Activated naive CD4-positive, alpha-beta T cell treated with anti-CD3 and anti-CD28 coated beads for 36 hours (primary cell): ENCODE measurements at regions of chr17 and their contacts with region 1.

Region 1: DNA sequence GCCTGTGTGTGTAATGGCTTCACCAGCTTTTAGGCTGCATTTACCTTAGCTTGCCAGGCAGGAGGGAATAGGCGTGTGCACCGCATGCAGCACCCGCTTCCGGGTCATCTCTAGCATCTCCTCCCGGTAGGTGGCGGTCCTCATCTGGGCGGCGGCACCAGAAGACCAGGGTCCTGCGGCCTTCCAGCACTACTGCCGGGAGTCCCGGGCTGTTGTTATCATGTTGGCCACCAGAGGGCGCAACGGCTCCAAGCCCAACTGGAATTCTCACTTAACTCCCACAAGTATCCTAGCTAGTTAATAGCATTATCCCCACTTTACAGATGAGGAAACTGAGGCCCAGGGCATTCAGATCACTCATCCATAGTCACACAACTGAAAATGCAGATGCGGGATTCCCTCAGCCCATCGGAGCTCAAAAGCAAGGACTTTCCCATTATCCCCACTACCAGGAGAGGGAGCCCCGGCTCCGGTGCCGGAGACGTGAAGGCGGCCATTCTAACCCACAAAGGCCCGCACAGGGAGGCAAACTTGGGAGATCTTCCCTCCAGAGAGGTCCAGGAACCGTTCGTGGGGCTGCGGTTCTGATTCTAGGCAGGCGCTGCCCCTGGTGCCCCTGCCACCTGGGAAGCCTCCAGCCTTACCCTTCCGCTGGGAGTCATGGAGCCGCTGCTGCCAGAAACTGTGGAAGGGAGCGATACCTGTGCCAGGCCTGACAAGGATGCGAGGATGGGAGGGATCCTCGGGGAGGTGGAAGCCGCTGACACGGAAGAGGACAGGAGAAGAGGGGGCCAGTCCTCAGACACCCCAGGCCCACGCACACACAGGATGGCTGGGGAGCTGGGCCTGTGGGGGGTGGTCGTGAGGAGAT is 23.9 kb downstream of the LGALS9 start:
- DNase-seq: peak; percentile 82
- H3K4me3 Mint-ChIP-seq: no peak overlapping the region
- H3K27ac Mint-ChIP-seq: no peak overlapping the region
- H3K4me1 Mint-ChIP-seq: peaks cover 6% of the 10 kb centered on the region
- H3K27me3 Mint-ChIP-seq: no peaks in the 10 kb centered on the region

Region 2: DNA sequence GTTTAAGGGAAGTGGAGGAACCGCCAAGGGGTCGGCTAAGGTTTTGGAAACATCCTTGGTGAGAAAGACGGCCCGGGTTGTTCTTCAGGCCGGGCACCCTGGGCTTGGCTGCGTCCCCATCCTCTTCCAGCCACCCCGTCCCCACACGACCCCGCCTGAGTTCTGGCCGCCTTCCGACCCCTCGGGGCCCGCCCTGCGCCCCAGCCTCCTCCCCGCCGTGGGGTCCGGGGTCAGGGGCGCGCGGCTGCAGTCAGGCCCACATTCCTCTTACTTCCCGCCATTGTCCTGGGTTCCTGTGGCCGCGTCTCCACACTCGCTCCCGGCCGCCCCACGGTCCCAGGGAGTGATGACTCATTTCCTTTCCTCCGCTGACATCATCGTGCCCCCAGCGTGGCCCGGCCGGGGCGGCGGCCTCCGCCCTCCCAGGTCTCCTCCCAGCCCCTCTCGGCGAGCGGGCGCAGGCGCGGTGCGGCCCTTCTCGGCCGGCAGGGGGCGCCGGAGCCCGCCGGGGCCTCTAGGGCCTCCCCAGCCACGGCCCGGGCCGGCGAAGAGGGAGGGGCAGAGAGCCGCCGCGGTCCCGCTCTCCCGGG is 301.3 kb before region 1 on chr17:
- CTCF ChIA-PET with region 1: interaction called, 10 read pairs
- intact Hi-C with region 1: loop called (anchors 1 kb)
- DNase-seq: peak; percentile 86
- H3K4me3 Mint-ChIP-seq: peak overlapping the region; percentile 89
- H3K27ac Mint-ChIP-seq: peak overlapping the region; percentile 93
- H3K4me1 Mint-ChIP-seq: peaks cover 23% of the 10 kb centered on the region
- H3K27me3 Mint-ChIP-seq: no peaks in the 10 kb centered on the region

Region 3: DNA sequence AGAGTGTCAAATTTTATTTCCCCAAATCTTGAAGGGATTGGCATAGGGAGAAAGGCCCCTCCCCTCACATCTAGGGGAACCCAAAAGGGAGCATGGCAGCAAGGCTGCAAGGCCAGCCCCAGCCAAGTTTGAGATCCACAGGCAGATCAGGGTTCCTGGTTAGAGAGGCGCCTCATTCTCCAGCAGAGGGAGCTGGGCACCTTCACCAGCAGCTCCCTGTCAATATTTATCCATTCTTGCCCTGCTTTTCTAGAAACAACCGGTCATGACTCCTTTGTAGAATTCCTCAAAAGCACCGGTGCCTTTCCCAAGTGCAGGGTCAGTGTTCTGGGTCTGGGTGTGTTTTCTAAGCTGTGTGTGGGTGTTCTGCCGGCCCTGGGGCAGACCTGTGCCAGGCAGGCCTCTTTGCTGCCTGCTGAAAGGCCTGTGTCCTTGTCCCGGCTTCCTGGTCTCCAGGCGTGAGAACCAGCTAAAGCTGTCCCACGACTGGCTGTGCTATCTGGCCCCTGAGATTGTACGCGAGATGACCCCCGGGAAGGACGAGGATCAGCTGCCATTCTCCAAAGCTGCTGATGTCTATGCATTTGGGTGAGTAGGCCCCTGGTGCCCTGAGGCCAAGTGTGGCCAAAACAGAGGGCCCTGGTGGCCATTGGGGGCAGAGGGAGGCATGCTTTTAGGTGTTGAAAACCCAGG is 45.1 kb before region 1 on chr17:
- CTCF ChIA-PET with region 1: interaction called, 124 read pairs
- intact Hi-C with region 1: no loop called
- DNase-seq: peak; percentile 41
- H3K4me3 Mint-ChIP-seq: no peak overlapping the region
- H3K27ac Mint-ChIP-seq: no peak overlapping the region
- H3K4me1 Mint-ChIP-seq: peaks cover 24% of the 10 kb centered on the region
- H3K27me3 Mint-ChIP-seq: no peaks in the 10 kb centered on the region

Region 4: DNA sequence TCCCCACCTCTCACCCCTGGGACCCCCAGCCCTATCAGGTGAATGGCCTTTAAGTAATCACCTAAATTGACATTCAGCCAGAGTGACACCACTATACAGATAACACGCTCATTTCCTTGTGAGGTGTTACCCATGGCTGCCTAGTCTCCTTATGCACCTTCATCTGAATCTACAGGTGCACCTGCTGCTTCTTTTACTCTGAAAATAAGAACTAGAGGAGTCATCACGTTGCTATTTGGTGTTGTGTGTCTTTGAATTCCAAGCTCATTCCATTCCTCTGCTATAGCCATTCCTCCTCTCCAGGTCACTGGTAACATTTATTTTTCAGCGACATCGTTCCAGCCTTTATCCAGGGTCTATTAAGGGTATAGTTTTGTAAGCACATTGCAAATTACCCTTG is 14.1 kb before region 1 on chr17:
- CTCF ChIA-PET with region 1: interaction called, 25 read pairs
- intact Hi-C with region 1: no loop called
- DNase-seq: no peak
- H3K4me3 Mint-ChIP-seq: no peak overlapping the region
- H3K27ac Mint-ChIP-seq: no peak overlapping the region
- H3K4me1 Mint-ChIP-seq: no peaks in the 10 kb centered on the region
- H3K27me3 Mint-ChIP-seq: no peaks in the 10 kb centered on the region

Region 5: DNA sequence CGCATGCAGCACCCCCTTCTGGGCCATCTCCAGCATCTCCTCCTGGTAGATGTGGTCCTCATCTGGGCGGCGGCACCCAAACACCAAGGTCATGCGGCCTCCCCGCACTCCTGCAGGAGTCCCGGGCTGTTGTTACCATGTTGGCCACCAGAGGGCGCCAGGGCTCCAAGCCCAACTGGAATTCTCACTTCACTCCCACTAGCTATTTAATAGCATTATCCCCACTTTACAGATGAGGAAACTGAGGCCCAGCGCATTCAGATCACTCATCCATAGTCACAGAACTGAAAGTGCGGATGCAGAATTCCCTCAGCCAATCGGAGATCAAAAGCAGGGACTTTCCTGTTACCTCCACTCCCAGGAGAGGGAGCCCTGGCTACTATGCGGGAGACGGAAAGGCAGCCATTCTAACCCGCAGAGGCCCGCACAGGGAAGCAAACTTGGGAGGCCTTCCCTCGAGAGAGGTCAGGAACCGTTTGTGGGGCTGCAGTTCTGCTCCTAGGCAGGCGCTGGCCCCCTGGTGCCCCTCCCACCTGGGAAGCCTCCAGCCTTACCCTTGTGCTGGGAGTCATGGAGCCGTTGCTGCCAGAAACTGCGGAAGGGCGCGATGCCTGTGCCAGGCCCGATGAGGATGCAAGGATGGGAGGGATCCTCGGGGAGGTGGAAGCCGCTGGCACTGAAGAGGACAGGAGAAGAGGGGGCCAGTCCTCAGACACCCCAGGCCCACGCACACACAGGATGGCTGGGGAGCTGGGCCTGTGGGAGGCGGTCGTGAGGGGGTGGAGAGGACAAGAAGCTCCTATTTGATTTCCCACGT is 105.4 kb after region 1 on chr17:
- CTCF ChIA-PET with region 1: interaction called, 94 read pairs
- intact Hi-C with region 1: loop called (anchors 1 kb)
- DNase-seq: peak; percentile 83
- H3K4me3 Mint-ChIP-seq: no peak overlapping the region
- H3K27ac Mint-ChIP-seq: no peak overlapping the region
- H3K4me1 Mint-ChIP-seq: no peaks in the 10 kb centered on the region
- H3K27me3 Mint-ChIP-seq: no peaks in the 10 kb centered on the region